ENCODE measurements at regions of chr5 and their contacts with region 1.

Region 1: DNA sequence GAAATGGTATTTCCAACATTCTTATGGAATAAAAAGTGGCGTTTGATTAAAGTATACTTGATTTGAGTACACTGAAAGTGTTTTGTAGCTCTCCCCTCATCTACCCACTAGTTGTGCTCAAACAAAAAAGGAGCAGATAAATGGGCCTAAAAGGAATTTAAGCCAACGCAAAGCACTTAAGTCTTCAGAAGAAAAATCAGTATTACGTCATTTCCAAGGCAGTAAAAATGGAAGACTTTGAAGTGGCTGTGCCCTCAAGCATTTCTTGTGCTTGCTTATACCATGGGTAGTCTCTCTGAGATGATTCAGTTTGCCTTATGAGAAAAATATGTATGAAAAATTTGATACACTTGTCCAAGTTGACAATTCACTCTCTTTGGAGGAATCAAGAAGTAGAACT is 279.9 kb upstream of the CD180 start:
- DNase-seq: peak; percentile 47
- H3K4me3 Mint-ChIP-seq: no peak overlapping the region
- H3K27ac Mint-ChIP-seq: peak overlapping the region; percentile 64
- H3K4me1 Mint-ChIP-seq: peaks cover 16% of the 10 kb centered on the region
- H3K27me3 Mint-ChIP-seq: no peaks in the 10 kb centered on the region
- CTCF ChIP-seq: no peak

Region 2: DNA sequence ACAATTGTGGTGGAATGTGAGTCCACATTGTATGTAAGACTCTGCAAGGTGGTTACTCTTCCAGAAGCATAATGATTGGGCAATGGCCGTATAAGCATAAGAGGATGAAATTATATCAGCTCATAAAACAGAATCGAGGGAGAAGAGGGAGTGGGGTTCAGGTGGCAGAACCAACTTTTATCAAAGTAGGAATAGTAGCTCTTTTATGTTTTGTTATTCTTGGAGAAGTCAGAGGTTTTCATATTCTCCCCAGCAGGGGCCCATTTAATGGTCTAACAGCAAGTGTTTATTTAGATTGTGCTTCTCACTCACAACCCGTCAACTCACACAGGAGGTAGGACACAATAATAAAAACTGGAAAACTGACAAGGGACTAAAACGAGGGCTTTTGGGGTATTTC is 11.3 kb after region 1 on chr5:
- CTCF ChIA-PET with region 1: no interaction called
- POLR2A ChIA-PET with region 1: interaction called, 10 read pairs
- intact Hi-C with region 1: no loop called
- DNase-seq: no peak
- H3K4me3 Mint-ChIP-seq: no peak overlapping the region
- H3K27ac Mint-ChIP-seq: no peak overlapping the region
- H3K4me1 Mint-ChIP-seq: peaks cover 26% of the 10 kb centered on the region
- H3K27me3 Mint-ChIP-seq: no peaks in the 10 kb centered on the region
- CTCF ChIP-seq: no peak

Measured in MCF 10A (cell line).